ENCODE measurements at regions of chr3 and their contacts with region 1.

Region 1: GRCh38 chr3:40317061-40317855 is 7.8 kb downstream of the EIF1B start:
- DNase-seq: peak; percentile 48
- CTCF ChIP-seq: peak; percentile 84

Region 2: GRCh38 chr3:40333416-40333815 is 16.2 kb after region 1 on chr3:
- CTCF ChIA-PET with region 1: interaction called, 11 read pairs
- POLR2A ChIA-PET with region 1: no interaction called
- DNase-seq: no peak
- CTCF ChIP-seq: no peak

Region 3: DNA sequence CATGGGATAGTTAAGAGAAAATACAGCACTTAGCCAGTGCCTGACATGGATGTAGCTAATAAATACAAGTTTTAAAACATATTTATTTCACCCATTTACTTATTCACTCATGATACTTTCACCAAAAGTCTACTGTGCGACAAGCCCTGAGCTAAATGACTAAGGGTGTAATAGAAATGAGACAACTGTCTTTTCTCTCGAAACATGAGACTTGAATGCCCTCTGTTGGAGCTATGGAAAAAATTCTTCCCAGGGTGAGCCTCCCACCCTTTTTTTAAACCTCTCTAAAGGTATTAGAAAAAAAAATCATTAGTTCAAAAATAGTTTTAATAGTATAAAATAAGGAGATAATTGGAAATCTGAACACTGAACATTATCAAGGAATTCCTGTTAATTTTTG is 115.5 kb after region 1 on chr3:
- CTCF ChIA-PET with region 1: no interaction called
- POLR2A ChIA-PET with region 1: no interaction called
- DNase-seq: no peak
- CTCF ChIP-seq: no peak

Region 4: DNA sequence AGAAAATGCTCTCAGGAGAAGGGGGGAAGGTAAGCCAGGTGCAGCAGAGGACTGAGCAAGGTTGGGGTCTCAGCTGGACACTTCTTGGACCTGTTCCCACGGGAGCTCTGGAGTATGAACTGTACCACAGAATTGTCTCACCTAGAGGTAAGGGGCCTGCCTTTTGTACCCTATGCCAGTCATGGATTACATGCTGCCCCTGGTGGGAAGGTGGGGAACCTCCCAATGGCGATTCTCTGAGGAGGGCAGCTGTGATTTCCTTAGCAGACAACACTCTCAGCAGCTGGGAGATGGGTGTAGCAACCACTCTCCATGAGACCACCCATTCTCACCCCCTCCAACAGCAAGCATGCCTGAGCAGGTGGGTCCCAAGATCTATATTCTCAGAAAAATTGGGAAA is 552.7 kb after region 1 on chr3:
- CTCF ChIA-PET with region 1: no interaction called
- POLR2A ChIA-PET with region 1: no interaction called
- DNase-seq: no peak
- CTCF ChIP-seq: no peak